ENCODE measurements at regions of chr1 and their contacts with region 1.

Region 1: DNA sequence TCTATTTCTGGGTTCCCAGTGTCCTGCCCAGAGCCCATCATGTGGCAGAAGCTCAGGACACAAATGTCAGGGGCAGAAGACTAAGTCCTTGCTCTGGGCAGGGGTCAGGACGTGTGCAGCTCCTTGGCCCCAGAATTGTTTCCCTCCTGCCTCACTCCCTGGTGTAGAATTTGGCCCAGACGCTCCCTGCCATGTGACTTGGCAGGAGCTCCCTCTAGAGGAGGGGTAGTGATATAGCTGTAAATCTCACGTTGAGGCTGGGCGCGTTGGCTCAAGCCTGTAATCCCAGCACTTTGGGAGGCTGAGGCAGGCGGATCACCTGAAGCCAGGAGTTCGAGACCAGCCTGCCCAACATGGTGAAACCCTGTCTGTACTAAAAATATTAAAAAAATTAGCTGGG is 91.2 kb downstream of the UBIAD1 start:
- DNase-seq: peak; percentile 34
- ATAC-seq: no peak
- H3K4me3 ChIP-seq: no peak overlapping the region
- H3K4me3 Mint-ChIP-seq: no peak overlapping the region
- H3K27ac ChIP-seq: no peak overlapping the region
- H3K27ac Mint-ChIP-seq: no peak overlapping the region
- H3K4me1 ChIP-seq: no peaks in the 10 kb centered on the region
- H3K4me1 Mint-ChIP-seq: no peaks in the 10 kb centered on the region
- H3K27me3 ChIP-seq: no peaks in the 10 kb centered on the region
- H3K27me3 Mint-ChIP-seq: peaks cover 15% of the 10 kb centered on the region
- CTCF ChIP-seq: peak; percentile 56

Region 2: GRCh38 chr1:10507111-10507879 is 856.9 kb before region 1 on chr1:
- CTCF ChIA-PET with region 1: no interaction called
- POLR2A ChIA-PET with region 1: no interaction called
- intact Hi-C with region 1: no loop called
- DNase-seq: peak; percentile 58
- ATAC-seq: peak; percentile 68
- H3K4me3 ChIP-seq: no peak overlapping the region
- H3K4me3 Mint-ChIP-seq: no peak overlapping the region
- H3K27ac ChIP-seq: peak overlapping the region in 1 of 2 donors; percentile 2
- H3K27ac Mint-ChIP-seq: peak overlapping the region; percentile 38
- H3K4me1 ChIP-seq: peaks cover 22 to 29% of the 10 kb centered on the region in 2 donors
- H3K4me1 Mint-ChIP-seq: peaks cover 38% of the 10 kb centered on the region
- H3K27me3 ChIP-seq: no peaks in the 10 kb centered on the region
- H3K27me3 Mint-ChIP-seq: no peaks in the 10 kb centered on the region
- CTCF ChIP-seq: peak; percentile 84

Region 3: GRCh38 chr1:11248155-11248554 is 116.0 kb before region 1 on chr1:
- CTCF ChIA-PET with region 1: interaction called, 24 read pairs
- POLR2A ChIA-PET with region 1: no interaction called
- intact Hi-C with region 1: no loop called
- DNase-seq: no peak
- ATAC-seq: no peak
- H3K4me3 ChIP-seq: no peak overlapping the region
- H3K4me3 Mint-ChIP-seq: no peak overlapping the region
- H3K27ac ChIP-seq: no peak overlapping the region
- H3K27ac Mint-ChIP-seq: no peak overlapping the region
- H3K4me1 ChIP-seq: no peaks in the 10 kb centered on the region
- H3K4me1 Mint-ChIP-seq: no peaks in the 10 kb centered on the region
- H3K27me3 ChIP-seq: no peaks in the 10 kb centered on the region
- H3K27me3 Mint-ChIP-seq: no peaks in the 10 kb centered on the region
- CTCF ChIP-seq: no peak

Region 4: GRCh38 chr1:11337580-11338073 is 26.5 kb before region 1 on chr1:
- CTCF ChIA-PET with region 1: no interaction called
- POLR2A ChIA-PET with region 1: no interaction called
- intact Hi-C with region 1: loop called (anchors 2 kb)
- DNase-seq: peak; percentile 72
- ATAC-seq: peak; percentile 56
- H3K4me3 ChIP-seq: no peak overlapping the region
- H3K4me3 Mint-ChIP-seq: no peak overlapping the region
- H3K27ac ChIP-seq: no peak overlapping the region
- H3K27ac Mint-ChIP-seq: no peak overlapping the region
- H3K4me1 ChIP-seq: peaks cover 16 to 23% of the 10 kb centered on the region in 2 donors
- H3K4me1 Mint-ChIP-seq: peaks cover 23% of the 10 kb centered on the region
- H3K27me3 ChIP-seq: peaks cover 0 to 20% (median 6%) of the 10 kb centered on the region in 4 experiments
- H3K27me3 Mint-ChIP-seq: peaks cover 23% of the 10 kb centered on the region
- CTCF ChIP-seq: peak; percentile 87

Region 5: DNA sequence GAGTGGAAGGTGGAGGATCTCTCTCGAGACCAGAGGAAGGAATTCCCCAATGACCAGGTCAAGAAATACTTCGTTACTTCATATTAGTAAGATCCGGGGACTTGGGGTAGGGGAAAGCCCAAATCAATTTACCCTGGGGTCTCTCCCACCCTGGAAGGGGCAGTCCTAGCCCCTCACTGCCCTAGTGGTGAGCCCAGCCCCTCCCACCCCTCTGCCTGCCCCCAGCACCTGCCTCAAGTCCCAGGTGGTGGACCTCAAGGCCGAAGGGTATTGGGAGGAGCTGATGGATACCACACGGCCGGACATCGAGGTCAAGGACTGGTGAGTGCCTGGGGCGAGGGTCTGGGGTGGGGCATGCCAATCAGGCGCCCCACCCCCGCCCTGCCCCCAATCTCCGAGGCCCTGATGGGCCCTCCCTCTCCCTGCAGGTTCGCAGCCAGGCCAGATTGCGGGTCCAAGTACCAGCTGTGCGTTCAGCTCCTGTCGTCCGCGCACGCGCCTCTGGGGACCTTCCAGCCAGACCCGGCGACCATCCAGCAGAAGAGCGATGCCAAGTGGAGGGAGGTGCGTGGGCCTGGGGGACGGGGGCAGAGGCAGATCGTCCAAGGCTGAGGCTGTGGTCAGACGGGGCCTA is 294.3 kb after region 1 on chr1:
- CTCF ChIA-PET with region 1: no interaction called
- POLR2A ChIA-PET with region 1: no interaction called
- intact Hi-C with region 1: no loop called
- DNase-seq: no peak
- ATAC-seq: no peak
- H3K4me3 ChIP-seq: no peak overlapping the region
- H3K4me3 Mint-ChIP-seq: no peak overlapping the region
- H3K27ac ChIP-seq: no peak overlapping the region
- H3K27ac Mint-ChIP-seq: no peak overlapping the region
- H3K4me1 ChIP-seq: peaks cover 8 to 16% of the 10 kb centered on the region in 2 donors
- H3K4me1 Mint-ChIP-seq: peaks cover 8% of the 10 kb centered on the region
- H3K27me3 ChIP-seq: no peaks in the 10 kb centered on the region
- H3K27me3 Mint-ChIP-seq: no peaks in the 10 kb centered on the region
- CTCF ChIP-seq: no peak

Measured in B cell (primary cell).